Activated CD8-positive, alpha-beta T cell treated with anti-CD3 and anti-CD28 coated beads for 36 hours (primary cell): ENCODE measurements at regions of chr6 and their contacts with region 1.

Region 1: DNA sequence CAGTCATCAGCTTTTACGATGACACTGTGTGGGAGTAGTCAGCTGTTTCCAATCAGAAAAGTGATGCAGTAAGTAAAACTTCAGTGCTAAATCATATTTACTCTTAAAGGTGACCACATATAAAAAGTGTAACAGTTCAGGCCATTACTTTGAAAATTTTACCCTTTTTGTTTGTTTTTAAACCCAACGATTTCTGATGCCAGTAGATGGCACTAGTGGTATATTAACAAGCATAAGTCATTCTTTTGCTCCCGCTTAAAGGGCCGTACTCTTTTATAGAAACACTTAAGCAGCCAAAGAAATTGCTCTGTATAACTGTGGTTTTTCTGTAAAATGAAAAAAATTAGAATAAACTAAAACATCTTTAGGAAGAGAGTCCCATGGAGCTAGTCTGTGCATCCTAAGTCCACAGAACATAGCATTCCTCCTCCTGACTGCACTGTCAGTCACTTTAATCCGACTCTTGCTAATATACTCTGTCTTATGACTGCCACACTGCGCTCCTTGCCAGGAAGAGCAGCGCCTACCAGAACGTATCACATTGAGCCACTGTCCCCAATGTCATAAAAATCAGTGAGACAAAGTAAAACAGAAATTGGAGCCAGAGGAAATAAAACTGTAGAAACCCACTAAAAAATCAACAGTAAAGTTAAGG is 25.0 kb downstream of the HEBP2 start:
- DNase-seq: no peak
- ATAC-seq: no peak
- H3K4me3 Mint-ChIP-seq: no peak overlapping the region
- H3K27ac Mint-ChIP-seq: no peak overlapping the region
- H3K4me1 Mint-ChIP-seq: no peaks in the 10 kb centered on the region
- H3K27me3 Mint-ChIP-seq: peaks cover 3% of the 10 kb centered on the region
- CTCF ChIP-seq: peak; percentile 72

Region 2: GRCh38 chr6:138440758-138441357 is 11.8 kb after region 1 on chr6:
- CTCF ChIA-PET with region 1: interaction called, 11 read pairs
- POLR2A ChIA-PET with region 1: no interaction called
- intact Hi-C with region 1: no loop called
- DNase-seq: no peak
- ATAC-seq: no peak
- H3K4me3 Mint-ChIP-seq: no peak overlapping the region
- H3K27ac Mint-ChIP-seq: no peak overlapping the region
- H3K4me1 Mint-ChIP-seq: no peaks in the 10 kb centered on the region
- H3K27me3 Mint-ChIP-seq: no peaks in the 10 kb centered on the region
- CTCF ChIP-seq: no peak

Region 3: GRCh38 chr6:138455746-138456400 is 26.8 kb after region 1 on chr6:
- CTCF ChIA-PET with region 1: interaction called, 13 read pairs
- POLR2A ChIA-PET with region 1: no interaction called
- intact Hi-C with region 1: no loop called
- DNase-seq: peak; percentile 49
- ATAC-seq: peak; percentile 65
- H3K4me3 Mint-ChIP-seq: peak overlapping the region; percentile 32
- H3K27ac Mint-ChIP-seq: peak overlapping the region; percentile 82
- H3K4me1 Mint-ChIP-seq: peaks cover 23% of the 10 kb centered on the region
- H3K27me3 Mint-ChIP-seq: no peaks in the 10 kb centered on the region
- CTCF ChIP-seq: no peak

Region 4: GRCh38 chr6:138509371-138509770 is 80.3 kb after region 1 on chr6:
- CTCF ChIA-PET with region 1: interaction called, 131 read pairs
- POLR2A ChIA-PET with region 1: interaction called, 3 read pairs
- intact Hi-C with region 1: loop called (anchors 2 kb)
- DNase-seq: peak; percentile 75
- ATAC-seq: peak; percentile 55
- H3K4me3 Mint-ChIP-seq: no peak overlapping the region
- H3K27ac Mint-ChIP-seq: no peak overlapping the region
- H3K4me1 Mint-ChIP-seq: no peaks in the 10 kb centered on the region
- H3K27me3 Mint-ChIP-seq: peaks cover 3% of the 10 kb centered on the region
- CTCF ChIP-seq: peak; percentile 63

Region 5: DNA sequence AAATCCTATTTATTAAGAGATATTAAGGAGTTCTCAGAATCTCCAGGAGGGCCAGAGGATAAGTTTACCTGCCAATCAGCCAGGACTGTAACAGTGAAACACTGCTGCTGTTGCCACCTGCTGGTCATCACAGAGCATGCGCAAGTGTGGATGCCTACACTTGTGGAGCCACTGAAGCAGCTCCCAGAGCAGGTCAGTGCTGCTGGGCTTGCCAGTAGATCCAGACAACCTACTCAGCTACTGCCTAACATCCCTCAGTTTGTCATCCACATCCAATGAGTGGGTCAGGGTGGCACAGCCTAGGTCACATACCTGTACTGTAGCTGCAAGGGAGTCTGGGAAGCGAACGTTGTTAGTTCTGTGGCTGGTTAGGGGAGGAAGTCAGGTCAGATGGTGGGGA is 88.6 kb after region 1 on chr6:
- CTCF ChIA-PET with region 1: interaction called, 131 read pairs
- POLR2A ChIA-PET with region 1: interaction called, 3 read pairs
- intact Hi-C with region 1: loop called (anchors 2 kb)
- DNase-seq: peak; percentile 68
- ATAC-seq: peak; percentile 96
- H3K4me3 Mint-ChIP-seq: no peak overlapping the region
- H3K27ac Mint-ChIP-seq: no peak overlapping the region
- H3K4me1 Mint-ChIP-seq: peaks cover 6% of the 10 kb centered on the region
- H3K27me3 Mint-ChIP-seq: peaks cover 7% of the 10 kb centered on the region
- CTCF ChIP-seq: peak; percentile 86

Region 6: GRCh38 chr6:138765896-138766655 is 337.0 kb after region 1 on chr6:
- CTCF ChIA-PET with region 1: no interaction called
- POLR2A ChIA-PET with region 1: no interaction called
- intact Hi-C with region 1: loop called (anchors 10 kb)
- DNase-seq: no peak
- ATAC-seq: peak; percentile 37
- H3K4me3 Mint-ChIP-seq: no peak overlapping the region
- H3K27ac Mint-ChIP-seq: no peak overlapping the region
- H3K4me1 Mint-ChIP-seq: peaks cover 10% of the 10 kb centered on the region
- H3K27me3 Mint-ChIP-seq: no peaks in the 10 kb centered on the region
- CTCF ChIP-seq: peak; percentile 89